Left colon (tissue), 2 donors: ENCODE measurements at regions of chrX and their contacts with region 1.

Region 1: GRCh38 chrX:53433651-53434639 is at the start of gene HSD17B10:
- DNase-seq: peak; percentile 91 to 93
- ATAC-seq: peak; percentile 98
- total RNA-seq, gene HSD17B10: 59.2 to 74.2 TPM

Region 2: GRCh38 chrX:53317365-53318069 is 116.4 kb before region 1 on chrX:
- intact Hi-C with region 1: loop called in 1 of 2 experiments (anchors 10 kb)
- DNase-seq: peak; percentile 50 to 79
- ATAC-seq: peak; percentile 68